ENCODE measurements at regions of chr1 and their contacts with region 1.

Region 1: DNA sequence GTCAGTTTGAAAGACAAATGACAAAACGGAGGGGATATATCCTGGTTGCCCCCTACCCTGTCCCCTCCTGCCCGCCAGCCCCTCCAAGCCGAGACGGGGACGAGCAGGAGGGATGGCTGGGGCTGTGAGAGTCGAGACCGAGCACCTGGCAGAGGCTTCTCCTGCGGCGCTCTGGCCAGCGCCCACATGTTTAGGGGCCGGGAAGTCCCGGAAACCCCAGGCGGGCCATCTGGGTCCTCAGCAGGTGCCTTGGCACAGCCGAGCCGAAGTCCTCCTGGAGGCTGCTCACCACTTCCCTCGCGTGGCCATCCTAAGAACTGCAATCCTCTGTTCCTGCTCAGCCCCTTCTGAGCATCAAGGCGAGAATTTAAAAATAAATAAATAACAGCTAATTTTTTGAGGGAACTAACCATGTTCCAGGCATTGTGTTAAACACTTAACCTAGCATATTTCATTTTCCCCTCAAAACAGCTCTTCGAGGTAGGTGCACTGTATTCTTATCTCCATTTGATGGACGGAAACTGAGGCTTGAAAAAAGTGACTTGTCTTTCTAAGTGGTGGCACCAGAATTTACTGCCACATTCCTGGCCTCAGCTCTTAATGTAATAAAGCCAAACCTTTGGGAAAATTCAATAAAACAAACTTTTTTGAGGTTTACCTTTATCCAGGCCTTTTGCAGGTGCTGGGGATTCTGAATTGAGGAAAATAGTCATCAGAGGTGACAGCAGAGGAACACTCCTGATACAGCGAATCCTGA is 3.5 kb upstream of the RIMS3 start:
- DNase-seq: peak; percentile 63 to 96
- H3K4me3 ChIP-seq: peak overlapping the region in 2 of 4 experiments; percentile 27 to 54; a peak in 4 of 8 replicates
- H3K27ac ChIP-seq: no peak overlapping the region
- H3K4me1 ChIP-seq: peaks cover 0 to 9% (median 7%) of the 10 kb centered on the region in 4 experiments; a peak in 6 of 7 replicates
- H3K27me3 ChIP-seq: no peaks in the 10 kb centered on the region; a peak in 2 of 7 replicates
- CTCF ChIP-seq: peak; percentile 83 to 91 (median 87)
- EP300 ChIP-seq: no peak
- POLR2A ChIP-seq: no peak
- RAD21 ChIP-seq: peak; percentile 73 to 82

Region 2: DNA sequence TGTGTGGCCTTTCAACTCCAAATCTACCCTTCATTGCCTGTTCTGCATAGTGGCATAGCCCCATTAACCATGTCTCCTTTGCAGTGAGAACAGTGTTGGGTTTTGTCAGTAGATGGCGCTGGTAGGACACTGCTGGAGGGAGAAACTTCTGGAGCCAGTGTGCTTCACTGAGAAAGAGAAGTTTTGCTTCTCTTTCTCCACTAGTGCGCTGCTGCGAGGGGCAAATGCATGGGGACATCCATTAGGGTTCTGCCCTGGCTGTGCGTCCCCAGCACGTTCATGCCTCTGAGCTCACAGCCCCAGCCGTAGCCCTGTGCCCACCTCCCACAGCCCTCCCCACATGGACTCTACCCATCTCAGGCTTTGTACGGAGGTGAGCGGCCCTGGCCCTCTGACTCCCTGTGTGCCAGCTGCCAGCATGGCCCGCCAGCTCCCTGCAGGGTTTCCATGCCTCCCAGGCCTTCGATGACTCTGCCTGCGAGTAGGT is 56.6 kb before region 1 on chr1:
- CTCF ChIA-PET with region 1: interaction called, 13 read pairs
- POLR2A ChIA-PET with region 1: no interaction called
- DNase-seq: peak in 1 of 2 experiments; percentile 83
- H3K4me3 ChIP-seq: no peak overlapping the region
- H3K27ac ChIP-seq: no peak overlapping the region
- H3K4me1 ChIP-seq: peaks cover 0 to 4% (median 2%) of the 10 kb centered on the region in 4 experiments; a peak in 3 of 7 replicates
- H3K27me3 ChIP-seq: no peaks in the 10 kb centered on the region
- CTCF ChIP-seq: peak; percentile 56 to 94 (median 88)
- EP300 ChIP-seq: no peak
- POLR2A ChIP-seq: no peak
- RAD21 ChIP-seq: peak; percentile 89 to 90

Region 3: GRCh38 chr1:40630488-40631381 is 38.2 kb before region 1 on chr1:
- CTCF ChIA-PET with region 1: interaction called, 684 read pairs
- POLR2A ChIA-PET with region 1: no interaction called
- DNase-seq: peak in 1 of 2 experiments; percentile 82
- H3K4me3 ChIP-seq: no peak overlapping the region
- H3K27ac ChIP-seq: no peak overlapping the region
- H3K4me1 ChIP-seq: no peaks in the 10 kb centered on the region; a peak in 1 of 7 replicates
- H3K27me3 ChIP-seq: no peaks in the 10 kb centered on the region; a peak in 1 of 7 replicates
- CTCF ChIP-seq: peak; percentile 83 to 91 (median 91)
- EP300 ChIP-seq: no peak
- POLR2A ChIP-seq: no peak
- RAD21 ChIP-seq: peak; percentile 62 to 72

Region 4: GRCh38 chr1:40650075-40650474 is 18.9 kb before region 1 on chr1:
- CTCF ChIA-PET with region 1: interaction called, 201 read pairs
- POLR2A ChIA-PET with region 1: interaction called, 34 read pairs
- DNase-seq: peak in 1 of 2 experiments; percentile 80
- H3K4me3 ChIP-seq: no peak overlapping the region
- H3K27ac ChIP-seq: no peak overlapping the region
- H3K4me1 ChIP-seq: peaks cover 13 to 19% (median 17%) of the 10 kb centered on the region in 4 experiments
- H3K27me3 ChIP-seq: no peaks in the 10 kb centered on the region
- CTCF ChIP-seq: peak; percentile 70 to 80 (median 75)
- EP300 ChIP-seq: no peak
- POLR2A ChIP-seq: no peak
- RAD21 ChIP-seq: peak; percentile 53 to 65

Region 5: DNA sequence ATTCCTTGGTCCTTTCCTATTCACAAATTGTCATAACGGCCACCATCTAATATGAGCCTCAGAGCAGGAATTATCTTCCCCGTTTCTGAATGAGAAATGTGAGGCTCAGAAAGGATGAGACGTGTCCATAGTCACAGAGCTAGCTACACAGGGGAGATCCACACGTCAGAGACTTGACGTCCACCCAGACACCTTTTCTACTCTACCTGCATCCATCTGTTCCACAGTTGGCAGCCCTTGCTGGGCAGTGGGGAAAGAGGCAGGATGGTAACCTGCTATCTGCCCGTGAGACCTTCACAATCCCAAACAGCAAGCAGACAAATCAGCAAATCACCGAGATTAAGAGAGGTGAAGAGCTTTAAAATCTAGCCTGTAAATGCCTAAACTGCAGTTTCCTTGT is 11.9 kb before region 1 on chr1:
- CTCF ChIA-PET with region 1: interaction called, 201 read pairs
- POLR2A ChIA-PET with region 1: interaction called, 34 read pairs
- DNase-seq: no peak
- H3K4me3 ChIP-seq: no peak overlapping the region
- H3K27ac ChIP-seq: no peak overlapping the region
- H3K4me1 ChIP-seq: peaks cover 11 to 21% (median 13%) of the 10 kb centered on the region in 4 experiments
- H3K27me3 ChIP-seq: no peaks in the 10 kb centered on the region
- CTCF ChIP-seq: no peak
- EP300 ChIP-seq: no peak
- POLR2A ChIP-seq: no peak
- RAD21 ChIP-seq: no peak

Region 6: GRCh38 chr1:40684669-40685068 is 15.7 kb after region 1 on chr1:
- CTCF ChIA-PET with region 1: interaction called, 28 read pairs
- POLR2A ChIA-PET with region 1: interaction called, 63 read pairs
- DNase-seq: no peak
- H3K4me3 ChIP-seq: no peak overlapping the region
- H3K27ac ChIP-seq: no peak overlapping the region
- H3K4me1 ChIP-seq: no peaks in the 10 kb centered on the region
- H3K27me3 ChIP-seq: no peaks in the 10 kb centered on the region
- CTCF ChIP-seq: no peak
- EP300 ChIP-seq: no peak
- POLR2A ChIP-seq: no peak
- RAD21 ChIP-seq: no peak

Region 7: DNA sequence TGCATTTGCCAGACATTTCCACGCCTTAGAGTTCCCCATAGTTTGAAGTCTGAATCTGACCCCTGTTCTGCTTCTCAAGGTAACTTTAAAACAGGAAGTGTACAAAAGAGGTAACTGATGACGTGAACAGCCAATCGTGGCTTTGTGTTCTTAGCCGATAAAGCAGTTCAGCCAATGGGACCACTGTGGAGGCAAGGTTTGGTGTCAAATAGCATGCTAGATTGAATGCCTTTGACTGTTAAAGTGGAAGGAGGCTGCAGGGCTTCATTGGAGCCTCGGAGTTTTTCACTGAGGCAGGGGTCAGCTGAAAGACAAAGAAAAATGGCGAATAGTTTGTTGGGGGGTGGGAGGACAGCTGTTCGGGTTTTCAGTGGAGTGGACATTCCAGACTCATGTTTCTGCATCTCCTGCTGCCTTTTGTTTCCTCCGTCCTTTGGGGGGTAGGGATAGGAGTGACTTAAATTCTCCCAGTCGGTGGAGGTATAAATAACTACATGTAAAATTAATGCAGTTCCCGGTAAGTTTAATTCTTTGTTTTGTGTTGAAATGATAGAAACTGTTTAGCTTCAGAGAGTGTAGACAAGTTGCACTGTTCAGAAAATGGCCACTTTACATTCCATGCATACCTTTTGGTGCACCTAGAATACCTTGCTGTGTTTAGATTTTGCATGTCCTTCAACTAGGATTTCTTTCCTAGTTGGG is 40.3 kb after region 1 on chr1:
- CTCF ChIA-PET with region 1: interaction called, 7 read pairs
- POLR2A ChIA-PET with region 1: interaction called, 20 read pairs
- DNase-seq: peak; percentile 71 to 75
- H3K4me3 ChIP-seq: peak overlapping the region; percentile 72 to 89 (median 80)
- H3K27ac ChIP-seq: peak overlapping the region; percentile 82
- H3K4me1 ChIP-seq: peaks cover 0 to 8% (median 5%) of the 10 kb centered on the region in 4 experiments; a peak in 4 of 7 replicates
- H3K27me3 ChIP-seq: no peaks in the 10 kb centered on the region
- CTCF ChIP-seq: no peak
- EP300 ChIP-seq: no peak
- POLR2A ChIP-seq: peak; percentile 71 to 91
- RAD21 ChIP-seq: no peak